ENCODE measurements at regions of chr18 and their contacts with region 1.

Region 1: GRCh38 chr18:55861266-55861665 is 273.3 kb upstream of the TCF4 start:
- DNase-seq: peak in 6 of 10 donors; percentile 42 to 83 (median 54)

Region 2: GRCh38 chr18:55998071-55998522 is 136.8 kb after region 1 on chr18:
- intact Hi-C with region 1: loop called (anchors 10 kb)
- DNase-seq: peak; percentile 48 to 97 (median 67)

Measured in posterior cingulate gyrus (tissue), 11 donors.